ENCODE measurements at regions of chr5 and their contacts with region 1.

Region 1: DNA sequence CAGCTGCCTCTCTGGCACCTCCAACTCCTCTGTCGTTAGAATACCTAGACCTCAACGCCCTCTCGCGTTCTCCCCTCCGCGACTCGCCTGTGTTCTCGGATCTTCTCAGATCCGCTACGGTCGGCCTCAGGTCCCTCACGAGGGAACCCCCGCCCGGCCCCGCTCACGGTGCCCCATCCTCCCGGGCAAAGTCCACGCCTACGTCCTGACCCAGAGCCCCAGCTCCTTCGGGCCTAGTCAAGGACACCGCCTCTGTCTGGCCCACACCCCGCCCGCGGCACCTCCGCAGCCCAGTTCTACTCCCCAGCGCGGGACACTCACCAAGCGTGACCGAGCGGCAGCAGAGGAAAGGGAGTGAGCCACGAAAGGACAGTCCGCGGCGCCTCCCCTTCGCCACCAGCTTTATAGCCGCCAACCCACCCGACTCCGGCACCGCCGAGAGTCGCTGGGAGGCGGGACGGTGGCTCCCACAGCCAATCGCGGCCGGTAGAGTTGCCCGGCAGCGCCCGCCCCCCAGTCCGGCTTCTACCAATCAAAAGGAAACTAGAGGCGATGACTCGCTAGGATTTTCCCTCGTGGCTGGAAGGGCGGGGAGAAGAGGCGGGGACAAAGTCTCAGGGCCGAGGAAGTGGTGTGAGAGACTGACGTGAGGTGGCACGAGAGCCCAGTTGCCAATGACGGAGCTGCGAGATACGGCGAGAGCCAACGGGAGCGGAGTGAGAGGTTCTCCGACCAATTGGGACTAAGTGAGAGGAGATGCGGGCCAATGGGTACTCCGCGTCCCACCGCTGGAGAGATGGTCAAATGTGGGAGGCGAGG is at the start of gene HMGCS1:
- DNase-seq: peak; percentile 98 to 99 (median 99)
- ATAC-seq: peak; percentile 98 to 99 (median 98)
- H3K4me3 ChIP-seq: peak within 1 kb of the TSS; percentile 67 to 97 (median 84)
- H3K27ac ChIP-seq: peak within 1 kb of the TSS; percentile 65 to 95 (median 87)
- H3K4me1 ChIP-seq: peaks cover 0 to 41% (median 25%) of the 10 kb centered on the region in 12 donors
- H3K27me3 ChIP-seq: no peaks in the 10 kb centered on the region
- CTCF ChIP-seq: peak in 2 of 12 donors; percentile 11 to 23
- POLR2A ChIP-seq: peak; percentile 93 to 96
- total RNA-seq, gene HMGCS1: 7.9 to 34.8 (median 30.0) TPM

Region 2: GRCh38 chr5:43120720-43121564 is 192.3 kb before region 1 on chr5 and contains the start of gene ZNF131:
- intact Hi-C with region 1: loop called in 7 of 10 experiments (anchors 1 to 10 kb)
- DNase-seq: peak; percentile 96 to 98 (median 96)
- ATAC-seq: peak; percentile 98 to 99 (median 98)
- H3K4me3 ChIP-seq: peak within 1 kb of the TSS; percentile 25 to 97 (median 82)
- H3K27ac ChIP-seq: peak within 1 kb of the TSS; percentile 86 to 100 (median 98)
- H3K4me1 ChIP-seq: peaks cover 4 to 34% (median 22%) of the 10 kb centered on the region in 12 donors
- H3K27me3 ChIP-seq: no peaks in the 10 kb centered on the region
- CTCF ChIP-seq: no peak
- POLR2A ChIP-seq: peak in 1 of 2 donors; percentile 7
- total RNA-seq, gene ZNF131: 10.9 to 21.6 (median 13.3) TPM

Region 3: GRCh38 chr5:43129161-43129560 is 184.1 kb before region 1 on chr5:
- intact Hi-C with region 1: loop called in 6 of 10 experiments (anchors 5 to 10 kb)
- DNase-seq: no peak
- ATAC-seq: no peak
- H3K4me3 ChIP-seq: no peak overlapping the region
- H3K27ac ChIP-seq: no peak overlapping the region
- H3K4me1 ChIP-seq: peaks cover 0 to 12% (median 2%) of the 10 kb centered on the region in 12 donors
- H3K27me3 ChIP-seq: no peaks in the 10 kb centered on the region
- CTCF ChIP-seq: no peak
- POLR2A ChIP-seq: no peak